ENCODE measurements at regions of chr19 and their contacts with region 1.

Region 1: GRCh38 chr19:34974646-34975045 is 10.6 kb upstream of the ZNF792 start:
- DNase-seq: no peak
- H3K4me3 Mint-ChIP-seq: no peak overlapping the region
- H3K27ac Mint-ChIP-seq: no peak overlapping the region
- H3K4me1 Mint-ChIP-seq: peaks cover 24% of the 10 kb centered on the region
- H3K27me3 Mint-ChIP-seq: no peaks in the 10 kb centered on the region

Region 2: DNA sequence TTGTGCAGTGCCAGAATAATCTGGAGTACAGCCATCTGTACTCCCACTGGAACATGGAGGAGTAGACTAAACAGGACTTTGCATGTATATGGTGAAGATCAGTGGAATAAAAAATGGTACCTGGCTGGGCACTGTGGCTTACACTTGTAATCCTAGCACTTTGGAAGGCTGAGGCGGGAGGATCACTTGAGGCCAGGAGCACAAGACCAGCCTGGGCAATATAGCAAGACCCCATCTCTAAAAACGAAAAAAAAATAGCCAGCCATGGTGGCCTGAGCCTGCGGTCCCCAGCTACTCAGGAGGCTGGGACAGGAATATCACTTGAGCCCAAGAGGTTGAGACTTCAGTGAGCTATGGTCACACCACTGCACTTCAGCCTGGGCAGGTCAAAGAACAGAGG is 526.5 kb before region 1 on chr19:
- CTCF ChIA-PET with region 1: no interaction called
- intact Hi-C with region 1: no loop called
- DNase-seq: no peak
- H3K4me3 Mint-ChIP-seq: no peak overlapping the region
- H3K27ac Mint-ChIP-seq: peak overlapping the region; percentile 33
- H3K4me1 Mint-ChIP-seq: peaks cover 1% of the 10 kb centered on the region
- H3K27me3 Mint-ChIP-seq: no peaks in the 10 kb centered on the region

Region 3: GRCh38 chr19:34985249-34986022 is 10.8 kb after region 1 on chr19:
- CTCF ChIA-PET with region 1: interaction called, 17 read pairs
- intact Hi-C with region 1: no loop called
- DNase-seq: peak; percentile 61
- H3K4me3 Mint-ChIP-seq: peak overlapping the region; percentile 65
- H3K27ac Mint-ChIP-seq: peak overlapping the region; percentile 80
- H3K4me1 Mint-ChIP-seq: peaks cover 33% of the 10 kb centered on the region
- H3K27me3 Mint-ChIP-seq: no peaks in the 10 kb centered on the region

Region 4: DNA sequence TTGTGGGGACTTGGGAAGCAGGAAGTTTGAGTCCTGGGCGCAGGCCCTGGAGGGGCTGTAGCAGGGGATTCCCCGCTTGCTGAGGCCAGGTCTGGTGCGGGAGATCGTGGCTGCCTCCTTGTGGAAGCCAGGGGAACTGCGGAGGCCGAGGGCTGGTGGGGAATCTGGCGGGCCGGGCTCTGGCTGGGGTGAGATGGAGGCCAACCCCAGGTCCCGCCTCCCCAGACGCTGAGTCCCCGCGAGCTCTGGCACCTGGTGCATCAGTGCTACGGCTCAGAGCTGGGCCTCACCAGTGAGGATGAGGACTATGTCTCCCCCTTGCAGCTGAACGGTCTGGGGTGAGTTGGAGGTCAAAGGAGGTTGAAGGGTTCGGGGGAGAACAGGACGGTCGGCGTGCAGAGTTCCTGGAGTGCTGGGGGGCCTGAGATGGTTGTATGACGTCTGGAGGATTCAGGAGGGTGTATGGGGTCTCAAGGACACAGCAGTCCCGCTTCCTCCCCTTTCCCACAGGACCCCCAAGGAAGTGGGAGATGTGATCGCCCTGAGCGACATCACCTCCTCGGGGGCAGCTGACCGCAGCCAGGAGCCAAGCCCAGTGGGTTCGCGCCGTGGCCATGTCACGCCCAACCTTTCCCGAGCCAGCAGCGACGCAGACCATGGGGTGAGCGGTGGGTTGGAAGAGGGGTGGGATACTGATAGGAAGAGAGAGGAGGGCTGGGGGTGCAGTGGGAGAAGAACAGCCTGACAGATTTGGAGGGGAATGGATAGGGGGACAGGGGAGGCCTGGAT is 38.6 kb after region 1 on chr19:
- CTCF ChIA-PET with region 1: interaction called, 110 read pairs
- intact Hi-C with region 1: loop called (anchors 1 kb)
- DNase-seq: peak; percentile 87
- H3K4me3 Mint-ChIP-seq: peak overlapping the region; percentile 60
- H3K27ac Mint-ChIP-seq: peak overlapping the region; percentile 90
- H3K4me1 Mint-ChIP-seq: peaks cover 57% of the 10 kb centered on the region
- H3K27me3 Mint-ChIP-seq: no peaks in the 10 kb centered on the region

Region 5: GRCh38 chr19:35090506-35091237 is 116.0 kb after region 1 on chr19:
- CTCF ChIA-PET with region 1: interaction called, 4 read pairs
- intact Hi-C with region 1: loop called (anchors 1 kb)
- DNase-seq: peak; percentile 64
- H3K4me3 Mint-ChIP-seq: no peak overlapping the region
- H3K27ac Mint-ChIP-seq: no peak overlapping the region
- H3K4me1 Mint-ChIP-seq: peaks cover 1% of the 10 kb centered on the region
- H3K27me3 Mint-ChIP-seq: peaks cover 5% of the 10 kb centered on the region

Region 6: DNA sequence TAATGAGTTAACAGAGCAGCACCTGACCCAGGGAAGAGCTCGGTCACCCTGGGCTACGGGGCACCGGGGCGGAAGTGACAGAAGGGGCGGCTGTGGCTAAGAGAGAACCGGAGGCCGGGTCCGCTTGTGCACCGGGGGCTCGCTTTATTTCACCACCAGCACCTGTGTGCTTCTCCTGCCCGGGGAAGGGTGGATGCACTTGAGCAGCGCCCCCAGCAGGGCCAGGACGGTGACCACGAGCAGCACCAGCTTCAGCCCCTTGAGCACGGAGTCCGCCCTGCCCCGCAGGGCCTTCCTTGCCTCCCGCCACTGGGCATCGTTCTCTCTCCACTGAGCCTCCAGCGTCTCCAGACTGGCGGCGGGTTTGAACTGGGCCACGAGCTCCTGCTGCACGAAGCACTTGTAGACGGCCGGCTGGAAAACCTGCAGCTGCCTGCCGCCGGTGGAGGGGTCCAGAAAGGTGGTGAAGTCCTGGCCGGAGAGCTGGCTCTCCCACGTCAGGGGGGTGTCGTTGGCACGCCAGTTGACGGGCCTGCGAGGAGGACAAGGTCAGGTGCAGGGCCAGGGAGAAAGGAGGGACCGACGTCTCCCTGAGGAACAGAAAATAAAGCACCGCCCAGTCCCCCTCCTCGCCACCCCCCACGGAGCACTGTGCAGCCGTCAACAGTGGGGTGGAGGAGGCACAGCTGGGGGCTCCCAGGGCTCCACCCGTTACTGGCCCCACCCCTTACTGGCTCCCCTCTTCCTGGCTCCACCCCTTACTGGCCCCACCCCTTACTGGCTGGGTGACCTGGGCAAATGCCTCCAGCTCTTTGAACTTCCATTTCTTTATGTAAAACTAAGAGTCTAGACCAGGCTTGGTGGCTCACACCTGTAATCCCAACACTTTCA is 250.3 kb after region 1 on chr19:
- CTCF ChIA-PET with region 1: no interaction called
- intact Hi-C with region 1: no loop called
- DNase-seq: peak; percentile 54
- H3K4me3 Mint-ChIP-seq: no peak overlapping the region
- H3K27ac Mint-ChIP-seq: no peak overlapping the region
- H3K4me1 Mint-ChIP-seq: peaks cover 27% of the 10 kb centered on the region
- H3K27me3 Mint-ChIP-seq: no peaks in the 10 kb centered on the region